ENCODE measurements at regions of chr9 and their contacts with region 1.

Region 1: GRCh38 chr9:120842690-120843499 is at the start of gene PSMD5:
- DNase-seq: peak; percentile 100
- H3K4me3 Mint-ChIP-seq: peak within 1 kb of the TSS; percentile 95
- H3K27ac Mint-ChIP-seq: peak within 1 kb of the TSS; percentile 95
- H3K4me1 Mint-ChIP-seq: peaks cover 81% of the 10 kb centered on the region
- H3K27me3 Mint-ChIP-seq: no peaks in the 10 kb centered on the region
- total RNA-seq, gene PSMD5: 62.1 to 63.5 TPM

Region 2: GRCh38 chr9:120714088-120714845 is 128.6 kb before region 1 on chr9 and contains the start of gene MEGF9:
- CTCF ChIA-PET with region 1: no interaction called
- intact Hi-C with region 1: loop called (anchors 1 kb)
- DNase-seq: peak; percentile 99
- H3K4me3 Mint-ChIP-seq: peak within 1 kb of the TSS; percentile 84
- H3K27ac Mint-ChIP-seq: peak within 1 kb of the TSS; percentile 30
- H3K4me1 Mint-ChIP-seq: peaks cover 39% of the 10 kb centered on the region
- H3K27me3 Mint-ChIP-seq: no peaks in the 10 kb centered on the region
- total RNA-seq, gene MEGF9: 3.8 TPM

Region 3: DNA sequence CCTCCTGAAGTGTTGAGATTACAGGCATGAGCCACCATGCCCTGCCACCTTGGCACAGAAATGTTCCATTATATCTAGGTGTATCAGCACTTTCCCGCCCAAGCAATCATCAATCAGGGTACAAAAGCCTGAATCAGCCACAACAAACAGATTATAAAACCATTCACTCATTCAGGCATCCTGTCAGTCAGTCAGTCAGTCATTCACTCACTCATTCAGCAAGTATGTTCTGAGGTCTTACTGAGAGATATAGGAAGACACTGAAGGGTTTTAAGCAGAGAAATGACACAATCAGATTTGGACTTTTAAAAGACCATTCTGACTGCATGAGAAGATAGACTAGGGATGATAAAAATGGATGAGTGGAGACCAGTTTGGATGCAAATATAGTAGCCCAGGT is 13.2 kb before region 1 on chr9:
- CTCF ChIA-PET with region 1: interaction called, 4 read pairs
- intact Hi-C with region 1: loop called (anchors 2 kb)
- DNase-seq: no peak
- H3K4me3 Mint-ChIP-seq: no peak overlapping the region
- H3K27ac Mint-ChIP-seq: peak overlapping the region; percentile 7
- H3K4me1 Mint-ChIP-seq: peaks cover 15% of the 10 kb centered on the region
- H3K27me3 Mint-ChIP-seq: no peaks in the 10 kb centered on the region

Region 4: DNA sequence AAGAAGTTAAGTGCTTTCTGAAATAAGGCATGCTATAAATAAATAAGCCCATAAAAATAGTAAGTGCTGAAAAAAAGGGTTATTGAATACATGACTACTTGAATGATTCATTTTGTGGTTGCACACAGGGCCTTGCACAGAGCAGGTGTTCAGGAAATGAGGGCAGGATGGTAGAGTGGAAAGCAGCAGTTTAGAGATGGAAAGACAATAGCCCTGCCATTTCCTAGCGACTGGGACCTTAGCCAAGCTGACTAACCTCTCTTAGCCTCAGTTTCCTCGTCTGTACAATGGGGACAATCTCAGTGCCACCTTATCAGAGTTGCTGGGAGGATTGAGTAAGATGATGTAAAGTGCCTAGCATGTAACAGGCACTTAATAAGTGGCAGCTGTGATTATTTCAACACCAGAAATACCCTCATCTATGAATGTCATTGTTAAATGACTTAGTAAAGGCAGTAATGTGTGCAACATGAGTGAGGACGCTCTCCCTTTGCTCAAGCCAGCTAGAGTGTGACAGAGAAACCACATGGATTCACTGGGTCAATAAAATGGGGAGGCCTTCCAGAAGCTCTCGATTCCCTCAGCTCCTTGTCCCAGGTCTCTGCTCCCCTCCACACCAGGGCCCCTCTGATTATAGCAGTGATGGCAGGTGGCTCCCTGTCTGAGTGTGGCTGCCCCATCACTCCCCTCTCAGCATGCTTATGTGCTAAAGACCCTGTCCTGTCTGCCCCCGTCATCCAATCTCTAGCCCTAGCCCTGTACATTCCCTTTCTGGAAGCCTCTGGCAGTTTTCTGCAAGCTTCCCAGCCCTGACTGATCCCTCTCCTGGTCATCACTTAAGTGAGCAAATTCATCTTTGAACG is 50.1 kb after region 1 on chr9:
- CTCF ChIA-PET with region 1: interaction called, 5 read pairs
- intact Hi-C with region 1: loop called (anchors 1 kb)
- DNase-seq: peak; percentile 86
- H3K4me3 Mint-ChIP-seq: peak overlapping the region; percentile 70
- H3K27ac Mint-ChIP-seq: peak overlapping the region; percentile 97
- H3K4me1 Mint-ChIP-seq: peaks cover 90% of the 10 kb centered on the region
- H3K27me3 Mint-ChIP-seq: no peaks in the 10 kb centered on the region

Region 5: DNA sequence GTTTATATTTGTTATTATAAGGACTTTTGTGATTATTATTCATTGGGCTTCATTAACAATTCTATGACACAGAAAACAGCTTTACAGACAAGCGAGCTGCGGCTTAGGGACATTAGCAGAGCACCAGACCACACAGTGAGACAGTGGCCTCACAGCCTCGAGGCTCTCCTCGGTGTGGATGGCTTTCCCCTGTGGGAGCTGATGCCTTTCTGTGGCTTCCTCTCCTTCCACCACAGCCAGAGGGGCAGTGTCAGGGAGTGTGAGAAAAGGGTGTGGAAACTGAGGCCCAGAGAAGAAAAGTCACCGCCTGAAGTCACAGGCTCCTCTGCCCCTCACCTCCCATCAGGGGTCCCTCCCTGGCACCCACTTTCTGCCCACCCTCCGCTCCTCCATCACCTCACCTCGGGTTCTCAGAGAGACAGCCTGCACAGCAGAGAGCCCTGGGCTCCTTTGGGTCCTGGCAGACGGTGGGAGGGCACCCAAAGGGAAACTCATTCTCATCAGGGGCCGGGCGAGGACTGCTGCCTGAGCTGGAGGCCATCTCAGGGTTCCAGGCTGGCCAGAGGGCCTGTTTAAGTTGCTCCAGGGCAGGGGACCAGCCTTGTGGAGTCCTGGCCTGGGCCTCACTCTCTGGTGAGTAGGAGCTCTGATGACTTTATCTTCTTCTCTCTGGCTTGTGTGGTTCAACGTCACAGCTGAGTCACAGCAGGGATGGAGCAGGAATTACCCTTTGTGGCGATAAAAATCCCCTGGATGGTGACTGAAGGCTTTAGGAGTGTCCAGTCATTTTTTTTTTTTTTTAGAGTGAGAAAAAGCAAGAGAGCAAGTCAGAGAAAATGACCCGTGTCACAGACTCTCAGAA is 82.9 kb after region 1 on chr9:
- CTCF ChIA-PET with region 1: interaction called, 3 read pairs
- intact Hi-C with region 1: loop called (anchors 1 kb)
- DNase-seq: peak; percentile 97
- H3K4me3 Mint-ChIP-seq: peak overlapping the region; percentile 92
- H3K27ac Mint-ChIP-seq: peak overlapping the region; percentile 98
- H3K4me1 Mint-ChIP-seq: peaks cover 74% of the 10 kb centered on the region
- H3K27me3 Mint-ChIP-seq: no peaks in the 10 kb centered on the region

Region 6: GRCh38 chr9:121121582-121122087 is 278.7 kb after region 1 on chr9:
- CTCF ChIA-PET with region 1: interaction called, 3 read pairs
- intact Hi-C with region 1: loop called (anchors 1 kb)
- DNase-seq: peak; percentile 99
- H3K4me3 Mint-ChIP-seq: peak overlapping the region; percentile 73
- H3K27ac Mint-ChIP-seq: peak overlapping the region; percentile 91
- H3K4me1 Mint-ChIP-seq: peaks cover 44% of the 10 kb centered on the region
- H3K27me3 Mint-ChIP-seq: no peaks in the 10 kb centered on the region